Adrenal gland (tissue), 19 donors: ENCODE measurements at regions of chr4 and their contacts with region 1.

Region 1: GRCh38 chr4:13559413-13559812 is 15.1 kb upstream of the NKX3-2 start:
- DNase-seq: no peak
- H3K4me3 ChIP-seq: no peak overlapping the region
- H3K27ac ChIP-seq: no peak overlapping the region
- H3K4me1 ChIP-seq: no peaks in the 10 kb centered on the region
- H3K27me3 ChIP-seq: no peaks in the 10 kb centered on the region
- CTCF ChIP-seq: no peak
- POLR2A ChIP-seq: no peak

Region 2: GRCh38 chr4:12734586-12734985 is 824.8 kb before region 1 on chr4:
- intact Hi-C with region 1: loop called in 1 of 2 experiments (anchors 10 kb)
- DNase-seq: peak in 1 of 7 donors; percentile 9
- H3K4me3 ChIP-seq: no peak overlapping the region
- H3K27ac ChIP-seq: no peak overlapping the region
- H3K4me1 ChIP-seq: peaks cover 0 to 5% of the 10 kb centered on the region in 2 donors
- H3K27me3 ChIP-seq: no peaks in the 10 kb centered on the region
- CTCF ChIP-seq: no peak
- POLR2A ChIP-seq: no peak

Region 3: GRCh38 chr4:13611283-13611842 is 52.0 kb after region 1 on chr4:
- intact Hi-C with region 1: no loop called
- DNase-seq: no peak
- H3K4me3 ChIP-seq: no peak overlapping the region
- H3K27ac ChIP-seq: no peak overlapping the region
- H3K4me1 ChIP-seq: no peaks in the 10 kb centered on the region
- H3K27me3 ChIP-seq: no peaks in the 10 kb centered on the region
- CTCF ChIP-seq: no peak
- POLR2A ChIP-seq: no peak